Tibial artery (tissue), 4 donors: ENCODE measurements at regions of chr16 and their contacts with region 1.

Region 1: GRCh38 chr16:72501739-72502593 is 330.0 kb upstream of the PMFBP1 start:
- DNase-seq: peak; percentile 49 to 72
- H3K4me3 ChIP-seq: no peak overlapping the region
- H3K27ac ChIP-seq: no peak overlapping the region
- H3K4me1 ChIP-seq: peaks cover 0 to 13% (median 0%) of the 10 kb centered on the region in 4 donors
- H3K27me3 ChIP-seq: no peaks in the 10 kb centered on the region
- CTCF ChIP-seq: peak; percentile 73 to 83

Region 2: GRCh38 chr16:72727565-72727964 is 225.6 kb after region 1 on chr16:
- intact Hi-C with region 1: no loop called
- DNase-seq: no peak
- H3K4me3 ChIP-seq: no peak overlapping the region
- H3K27ac ChIP-seq: no peak overlapping the region
- H3K4me1 ChIP-seq: no peaks in the 10 kb centered on the region
- H3K27me3 ChIP-seq: no peaks in the 10 kb centered on the region
- CTCF ChIP-seq: no peak

Region 3: GRCh38 chr16:73196670-73197069 is 694.7 kb after region 1 on chr16:
- intact Hi-C with region 1: loop called (anchors 10 kb)
- DNase-seq: peak; percentile 77 to 83
- H3K4me3 ChIP-seq: no peak overlapping the region
- H3K27ac ChIP-seq: no peak overlapping the region
- H3K4me1 ChIP-seq: peaks cover 0 to 5% (median 0%) of the 10 kb centered on the region in 4 donors
- H3K27me3 ChIP-seq: no peaks in the 10 kb centered on the region
- CTCF ChIP-seq: peak; percentile 61 to 65

Region 4: GRCh38 chr16:73888840-73889490 is 1387.0 kb after region 1 on chr16:
- intact Hi-C with region 1: loop called (anchors 10 kb)
- DNase-seq: no peak
- H3K4me3 ChIP-seq: peak overlapping the region; percentile 12 to 31
- H3K27ac ChIP-seq: peak overlapping the region; percentile 29 to 70
- H3K4me1 ChIP-seq: peaks cover 0 to 6% (median 0%) of the 10 kb centered on the region in 4 donors
- H3K27me3 ChIP-seq: peaks cover 0 to 7% of the 10 kb centered on the region in 2 donors
- CTCF ChIP-seq: no peak